Heart left ventricle (tissue), 16 donors: ENCODE measurements at regions of chr1 and their contacts with region 1.

Region 1: GRCh38 chr1:113804421-113805255 is 7.6 kb downstream of the RSBN1 start:
- DNase-seq: no peak
- ATAC-seq: peak; percentile 62 to 92 (median 89)
- H3K4me3 ChIP-seq: no peak overlapping the region
- H3K27ac ChIP-seq: peak overlapping the region in 9 of 12 donors; percentile 2 to 58 (median 36)
- H3K4me1 ChIP-seq: peaks cover 2 to 73% (median 48%) of the 10 kb centered on the region in 12 donors
- H3K27me3 ChIP-seq: no peaks in the 10 kb centered on the region
- CTCF ChIP-seq: no peak
- POLR2A ChIP-seq: no peak

Region 2: DNA sequence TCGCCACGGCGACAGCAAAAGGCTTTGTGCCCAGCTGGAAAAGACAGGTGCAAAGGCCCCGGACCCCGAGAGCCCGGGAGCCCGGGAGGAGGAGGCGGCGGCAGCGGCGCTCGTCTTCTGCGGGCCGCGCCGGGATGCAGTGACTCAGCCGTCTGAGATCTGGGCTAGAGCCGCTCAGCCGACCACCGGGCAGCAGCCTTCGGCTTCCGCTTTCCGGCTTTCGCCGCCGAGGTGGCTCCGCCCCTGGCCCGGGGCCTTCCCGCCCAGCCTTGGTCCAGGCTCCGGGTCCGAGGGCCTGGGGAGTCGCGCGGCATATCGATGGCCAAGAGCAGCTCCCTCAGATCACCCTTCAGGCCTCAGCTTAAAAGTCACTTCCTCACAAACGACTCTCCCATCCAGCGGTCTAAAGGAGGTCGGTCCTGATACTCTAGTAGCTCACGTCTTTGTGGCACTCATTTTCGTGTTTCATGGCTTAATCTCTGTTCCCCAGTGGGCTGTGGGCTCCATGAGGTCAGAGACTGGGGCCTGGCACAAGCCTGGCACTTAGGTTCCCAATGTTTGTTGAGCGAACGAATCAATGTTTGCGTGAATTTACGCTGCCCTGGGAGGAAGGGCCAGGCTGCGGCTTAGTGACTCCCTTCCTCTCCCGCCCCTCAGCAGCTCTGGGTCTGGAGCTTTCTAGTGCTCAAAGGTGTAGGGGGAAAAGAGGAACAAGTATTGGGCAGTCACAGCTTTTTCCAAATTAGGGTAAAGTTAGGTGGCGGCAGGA is 45.1 kb before region 1 on chr1 and contains the start of gene PHTF1:
- intact Hi-C with region 1: loop called in 1 of 10 experiments (anchors 5 kb)
- DNase-seq: peak; percentile 70 to 91 (median 84)
- ATAC-seq: peak; percentile 87 to 94 (median 94)
- H3K4me3 ChIP-seq: peak within 1 kb of the TSS; percentile 50 to 94 (median 86)
- H3K27ac ChIP-seq: peak within 1 kb of the TSS; percentile 86 to 97 (median 95)
- H3K4me1 ChIP-seq: peaks cover 0 to 27% (median 10%) of the 10 kb centered on the region in 12 donors
- H3K27me3 ChIP-seq: no peaks in the 10 kb centered on the region
- CTCF ChIP-seq: no peak
- POLR2A ChIP-seq: peak in 1 of 2 donors; percentile 60
- total RNA-seq, gene PHTF1: 5.5 to 19.7 (median 11.9) TPM